H1 (cell line): ENCODE measurements at regions of chr2 and their contacts with region 1.

Region 1: GRCh38 chr2:3827673-3828575 is 124.5 kb downstream of the DCDC2C start:
- DNase-seq: no peak
- H3K4me3 ChIP-seq: no peak overlapping the region
- H3K27ac ChIP-seq: no peak overlapping the region
- H3K4me1 ChIP-seq: no peaks in the 10 kb centered on the region
- H3K27me3 ChIP-seq: no peaks in the 10 kb centered on the region
- CTCF ChIP-seq: peak; percentile 32 to 69 (median 58)
- EP300 ChIP-seq: no peak
- POLR2A ChIP-seq: no peak
- RAD21 ChIP-seq: peak; percentile 54 to 65

Region 2: DNA sequence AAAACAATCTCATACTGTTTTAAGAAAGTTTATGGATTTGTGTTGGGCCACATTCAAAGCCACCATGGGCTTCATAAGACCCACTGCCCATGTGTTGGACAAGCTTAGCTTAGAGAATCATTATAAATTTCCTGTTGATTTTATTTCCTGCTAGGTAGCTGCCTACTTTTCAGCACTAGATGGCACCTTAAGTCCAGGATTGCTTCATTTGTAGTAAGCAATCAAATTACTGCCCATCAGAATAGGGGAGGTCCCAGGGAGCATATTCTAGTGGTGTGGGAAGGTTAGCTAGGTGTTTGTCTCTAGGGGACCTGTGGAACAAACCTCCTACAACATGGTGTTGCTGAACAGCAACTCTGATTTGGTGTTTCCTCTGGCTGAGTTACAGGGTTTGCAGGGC is 135.5 kb before region 1 on chr2:
- CTCF ChIA-PET with region 1: interaction called, 12 read pairs
- POLR2A ChIA-PET with region 1: no interaction called
- DNase-seq: peak in 1 of 2 experiments; percentile 48
- H3K4me3 ChIP-seq: no peak overlapping the region
- H3K27ac ChIP-seq: no peak overlapping the region
- H3K4me1 ChIP-seq: no peaks in the 10 kb centered on the region
- H3K27me3 ChIP-seq: no peaks in the 10 kb centered on the region; a peak in 1 of 7 replicates
- CTCF ChIP-seq: peak in 2 of 3 experiments; percentile 67 to 75; a peak in 3 of 4 replicates
- EP300 ChIP-seq: no peak
- POLR2A ChIP-seq: no peak
- RAD21 ChIP-seq: peak; percentile 94

Region 3: GRCh38 chr2:3805201-3805939 is 22.6 kb before region 1 on chr2:
- CTCF ChIA-PET with region 1: interaction called, 15 read pairs
- POLR2A ChIA-PET with region 1: no interaction called
- DNase-seq: peak in 1 of 2 experiments; percentile 83
- H3K4me3 ChIP-seq: no peak overlapping the region
- H3K27ac ChIP-seq: no peak overlapping the region
- H3K4me1 ChIP-seq: no peaks in the 10 kb centered on the region
- H3K27me3 ChIP-seq: no peaks in the 10 kb centered on the region
- CTCF ChIP-seq: peak; percentile 76 to 87 (median 82)
- EP300 ChIP-seq: no peak
- POLR2A ChIP-seq: no peak
- RAD21 ChIP-seq: peak; percentile 70 to 73

Region 4: DNA sequence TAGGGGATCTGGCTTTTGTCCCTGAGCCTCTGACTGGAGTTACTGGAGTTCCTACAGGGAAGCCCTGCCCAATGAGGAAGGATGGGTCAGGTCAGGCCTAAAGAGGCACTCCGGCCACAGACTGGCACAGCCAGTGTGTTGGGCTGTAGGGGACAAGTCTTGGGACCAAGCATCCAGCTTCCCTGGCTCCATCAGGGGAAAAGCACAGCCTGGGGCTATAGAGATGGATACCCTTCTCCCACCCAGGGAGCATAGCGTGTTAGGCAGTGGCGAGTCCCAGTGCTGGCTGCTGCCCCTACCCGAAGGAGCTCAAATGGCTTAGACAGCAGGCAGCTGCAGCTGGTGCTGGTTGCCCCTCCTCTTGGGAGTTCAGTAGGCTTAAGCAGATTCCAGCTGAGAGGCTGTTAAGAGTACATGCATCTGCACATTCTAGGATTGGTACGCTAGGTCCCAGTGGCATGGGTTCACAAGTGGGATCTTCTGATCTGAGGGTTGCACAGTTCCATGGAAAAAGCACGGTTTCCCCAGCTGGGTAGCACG is 13.1 kb before region 1 on chr2:
- CTCF ChIA-PET with region 1: interaction called, 11 read pairs
- POLR2A ChIA-PET with region 1: no interaction called
- DNase-seq: no peak
- H3K4me3 ChIP-seq: no peak overlapping the region
- H3K27ac ChIP-seq: no peak overlapping the region
- H3K4me1 ChIP-seq: peaks cover 0 to 7% (median 6%) of the 10 kb centered on the region in 4 experiments; a peak in 4 of 7 replicates
- H3K27me3 ChIP-seq: no peaks in the 10 kb centered on the region
- CTCF ChIP-seq: no peak
- EP300 ChIP-seq: no peak
- POLR2A ChIP-seq: no peak
- RAD21 ChIP-seq: no peak

Region 5: DNA sequence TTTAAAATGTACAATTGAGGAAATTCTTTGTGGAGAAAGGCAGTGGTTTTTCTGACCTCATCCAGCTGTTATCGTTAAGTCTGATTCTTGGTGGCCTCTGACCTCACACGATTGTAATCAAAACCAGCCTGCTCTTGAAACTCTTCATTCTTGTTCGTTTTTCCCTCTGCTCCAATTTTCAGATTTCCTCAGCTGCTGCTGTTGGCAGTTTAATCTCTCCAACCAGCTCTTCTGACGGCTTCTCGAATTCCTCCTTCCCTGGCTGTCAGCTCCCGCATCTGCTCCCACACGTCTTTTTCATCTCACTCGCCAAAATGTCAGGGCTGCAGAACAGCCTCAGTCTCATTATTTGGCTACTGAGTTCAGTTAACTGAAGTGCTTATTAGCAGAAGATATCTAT is 11.6 kb after region 1 on chr2:
- CTCF ChIA-PET with region 1: interaction called, 24 read pairs
- POLR2A ChIA-PET with region 1: no interaction called
- DNase-seq: no peak
- H3K4me3 ChIP-seq: no peak overlapping the region
- H3K27ac ChIP-seq: no peak overlapping the region
- H3K4me1 ChIP-seq: peaks cover 0 to 3% (median 0%) of the 10 kb centered on the region in 4 experiments; a peak in 1 of 7 replicates
- H3K27me3 ChIP-seq: peaks cover 0 to 1% (median 0%) of the 10 kb centered on the region in 4 experiments; a peak in 1 of 7 replicates
- CTCF ChIP-seq: no peak
- EP300 ChIP-seq: no peak
- POLR2A ChIP-seq: no peak
- RAD21 ChIP-seq: no peak

Region 6: DNA sequence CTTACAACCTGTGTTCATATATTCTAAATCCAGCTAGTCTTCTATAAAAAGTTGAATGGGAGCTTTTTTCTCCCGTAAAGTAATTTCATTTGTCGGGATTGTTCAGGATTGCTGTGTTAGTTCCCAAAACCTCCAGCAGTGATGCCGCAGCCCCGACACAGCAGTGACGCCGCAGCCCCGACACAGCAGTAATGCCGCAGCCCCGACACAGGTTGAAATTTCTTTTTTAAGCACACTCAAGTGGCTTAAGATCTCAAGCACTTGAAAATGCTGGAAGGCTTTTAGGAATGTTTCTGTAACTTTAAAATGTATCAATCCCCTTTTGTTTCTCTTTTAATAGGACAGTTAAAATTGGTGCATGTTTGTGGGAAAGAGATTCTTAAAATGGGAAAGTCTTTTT is 20.9 kb after region 1 on chr2:
- CTCF ChIA-PET with region 1: interaction called, 16 read pairs
- POLR2A ChIA-PET with region 1: no interaction called
- DNase-seq: no peak
- H3K4me3 ChIP-seq: no peak overlapping the region
- H3K27ac ChIP-seq: no peak overlapping the region
- H3K4me1 ChIP-seq: no peaks in the 10 kb centered on the region
- H3K27me3 ChIP-seq: no peaks in the 10 kb centered on the region
- CTCF ChIP-seq: no peak
- EP300 ChIP-seq: no peak
- POLR2A ChIP-seq: no peak
- RAD21 ChIP-seq: no peak